WTC11 (cell line): ENCODE measurements at regions of chr5 and their contacts with region 1.

Region 1: DNA sequence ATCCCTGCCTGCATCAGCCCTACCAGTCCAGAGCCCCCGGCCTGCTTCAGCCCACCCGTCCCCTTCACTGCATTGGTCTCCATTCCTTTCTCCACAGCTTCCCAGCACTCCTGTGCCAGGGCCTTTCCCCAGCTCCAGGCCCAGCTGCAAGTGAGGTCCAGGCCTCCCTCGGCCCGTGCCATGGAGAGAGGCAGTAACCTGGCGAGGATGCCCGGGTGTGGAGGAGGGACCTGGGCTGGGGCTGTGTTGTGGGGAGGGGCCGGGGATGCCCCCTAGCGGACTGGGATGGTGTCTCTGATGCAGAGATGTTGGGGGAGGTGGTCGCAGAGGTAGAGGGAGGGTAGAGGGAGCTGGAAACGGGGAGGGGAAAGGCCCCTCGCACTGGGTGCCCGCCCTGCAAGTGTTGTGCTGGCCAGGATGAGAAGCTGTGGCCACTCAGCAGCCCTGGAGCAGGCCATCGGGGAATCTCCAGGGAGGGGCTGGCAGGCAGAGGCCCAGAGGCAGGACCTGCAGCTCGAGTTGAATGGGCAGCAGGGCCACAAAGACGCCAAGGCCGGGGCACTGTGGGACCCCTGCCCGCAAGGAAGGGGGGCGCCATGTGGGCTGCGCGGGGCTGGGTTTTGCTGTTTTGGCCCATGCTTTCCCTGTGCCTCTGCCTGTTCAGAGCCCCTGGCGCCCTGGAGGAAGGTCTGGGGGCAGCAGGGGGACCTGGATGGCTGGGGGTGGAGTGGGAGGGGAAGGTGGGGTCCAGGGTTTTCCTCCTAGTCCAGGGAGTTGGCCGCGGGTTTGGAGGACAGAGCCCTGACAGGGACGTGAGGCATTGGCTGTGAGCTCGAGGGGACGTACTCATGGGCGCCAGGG is 26.0 kb upstream of the NKD2 start:
- DNase-seq: peak; percentile 76
- ATAC-seq: peak; percentile 99
- H3K4me3 Mint-ChIP-seq: no peak overlapping the region
- H3K27ac Mint-ChIP-seq: no peak overlapping the region
- H3K4me1 Mint-ChIP-seq: no peaks in the 10 kb centered on the region
- H3K27me3 Mint-ChIP-seq: peaks cover 6% of the 10 kb centered on the region; the same call in 1 of the 2 replicates
- CTCF ChIP-seq: peak; percentile 63

Region 2: GRCh38 chr5:945691-946551 is 36.7 kb before region 1 on chr5:
- CTCF ChIA-PET with region 1: interaction called, 12 read pairs
- POLR2A ChIA-PET with region 1: interaction called, 3 read pairs
- DNase-seq: no peak
- ATAC-seq: peak; percentile 47
- H3K4me3 Mint-ChIP-seq: no peak overlapping the region
- H3K27ac Mint-ChIP-seq: no peak overlapping the region
- H3K4me1 Mint-ChIP-seq: peaks cover 3% of the 10 kb centered on the region; the same call in 1 of the 2 replicates
- H3K27me3 Mint-ChIP-seq: peaks cover 4% of the 10 kb centered on the region; the same call in 1 of the 2 replicates
- CTCF ChIP-seq: no peak

Region 3: GRCh38 chr5:969408-969839 is 13.2 kb before region 1 on chr5:
- CTCF ChIA-PET with region 1: interaction called, 13 read pairs
- POLR2A ChIA-PET with region 1: no interaction called
- DNase-seq: no peak
- ATAC-seq: no peak
- H3K4me3 Mint-ChIP-seq: no peak overlapping the region
- H3K27ac Mint-ChIP-seq: no peak overlapping the region
- H3K4me1 Mint-ChIP-seq: no peaks in the 10 kb centered on the region
- H3K27me3 Mint-ChIP-seq: no peaks in the 10 kb centered on the region; the same call in none of the 2 replicates
- CTCF ChIP-seq: no peak

Region 4: DNA sequence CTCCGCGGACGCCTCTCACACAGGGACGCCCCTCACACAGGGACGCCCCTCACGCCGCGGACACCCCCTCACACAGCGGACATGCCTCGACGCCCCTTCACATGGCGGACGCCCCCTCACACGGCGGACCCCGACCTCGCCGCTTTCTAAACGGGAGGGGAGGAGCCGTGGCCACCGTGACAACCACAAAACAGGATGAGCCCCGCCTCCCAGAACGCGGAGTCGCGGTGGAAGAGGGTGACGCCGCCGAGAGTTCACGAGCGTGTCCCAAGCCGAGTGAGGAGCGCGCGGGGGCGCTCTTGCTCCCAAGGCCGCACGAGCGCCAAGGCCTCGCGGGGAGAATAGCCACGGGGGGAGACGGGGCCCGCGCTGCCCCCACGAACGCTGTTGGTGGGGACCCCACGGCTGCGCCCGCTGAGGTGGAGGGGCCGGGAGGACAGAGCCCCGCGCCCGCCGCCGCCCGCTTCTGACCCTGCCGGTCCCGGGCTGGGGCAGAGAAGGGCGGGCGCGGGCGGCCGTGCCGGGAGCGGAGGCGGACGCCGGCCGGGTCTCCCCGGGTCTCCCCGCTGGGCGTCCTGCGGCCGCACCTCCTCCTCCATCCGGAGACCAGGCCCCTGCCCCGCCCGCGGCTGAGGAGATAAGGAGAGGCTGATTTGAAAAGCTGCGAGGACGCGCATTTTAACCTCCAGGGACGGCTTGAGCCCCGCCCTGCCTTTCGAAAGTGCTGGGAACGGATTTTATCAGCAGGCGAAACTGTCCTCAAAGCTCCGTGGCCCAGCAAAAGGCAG is 22.0 kb after region 1 on chr5:
- CTCF ChIA-PET with region 1: interaction called, 26 read pairs
- POLR2A ChIA-PET with region 1: no interaction called
- DNase-seq: peak; percentile 59
- ATAC-seq: peak; percentile 31
- H3K4me3 Mint-ChIP-seq: peak overlapping the region; percentile 62
- H3K27ac Mint-ChIP-seq: no peak overlapping the region
- H3K4me1 Mint-ChIP-seq: peaks cover 11% of the 10 kb centered on the region
- H3K27me3 Mint-ChIP-seq: peaks cover 51% of the 10 kb centered on the region
- CTCF ChIP-seq: no peak